ENCODE measurements at regions of chr1 and their contacts with region 1.

Region 1: DNA sequence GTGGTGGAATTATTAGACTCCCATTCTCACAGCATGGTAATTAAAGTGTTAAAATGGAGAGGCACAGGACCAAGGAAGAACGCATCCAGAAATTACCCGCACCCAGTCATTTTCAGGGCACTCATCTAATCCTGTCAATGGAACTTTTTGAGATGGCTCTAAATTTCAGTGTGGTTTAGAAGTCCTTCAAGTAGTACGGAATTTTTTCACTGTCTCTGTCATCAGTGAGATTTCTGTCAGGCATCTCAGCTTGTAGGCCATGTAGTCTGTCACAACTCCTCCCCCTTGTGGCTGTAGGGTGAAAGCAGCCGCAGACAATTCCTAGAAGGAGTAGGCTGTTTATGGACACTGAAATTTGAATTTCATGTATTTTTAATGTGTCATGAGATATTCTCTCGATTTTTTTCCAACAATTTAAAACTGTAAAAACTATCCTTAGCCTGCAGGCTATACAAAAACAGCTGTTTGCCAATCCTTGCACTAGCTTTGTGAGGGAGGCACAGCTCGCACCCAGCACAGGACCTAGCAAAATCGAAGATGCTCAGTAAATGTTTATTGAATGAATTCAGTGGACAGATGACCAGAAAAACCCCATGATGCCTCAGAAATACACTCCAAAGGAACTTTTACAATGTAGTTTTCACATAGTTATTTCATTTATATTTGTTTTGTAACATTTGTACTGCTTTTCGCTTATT is 6.6 kb upstream of the NUP133 start:
- DNase-seq: peak; percentile 47
- H3K4me3 ChIP-seq: no peak overlapping the region
- CTCF ChIP-seq: peak; percentile 83

Region 2: GRCh38 chr1:229529639-229530038 is 14.9 kb after region 1 on chr1:
- CTCF ChIA-PET with region 1: interaction called, 29 read pairs
- POLR2A ChIA-PET with region 1: no interaction called
- DNase-seq: no peak
- H3K4me3 ChIP-seq: no peak overlapping the region
- CTCF ChIP-seq: no peak

Region 3: DNA sequence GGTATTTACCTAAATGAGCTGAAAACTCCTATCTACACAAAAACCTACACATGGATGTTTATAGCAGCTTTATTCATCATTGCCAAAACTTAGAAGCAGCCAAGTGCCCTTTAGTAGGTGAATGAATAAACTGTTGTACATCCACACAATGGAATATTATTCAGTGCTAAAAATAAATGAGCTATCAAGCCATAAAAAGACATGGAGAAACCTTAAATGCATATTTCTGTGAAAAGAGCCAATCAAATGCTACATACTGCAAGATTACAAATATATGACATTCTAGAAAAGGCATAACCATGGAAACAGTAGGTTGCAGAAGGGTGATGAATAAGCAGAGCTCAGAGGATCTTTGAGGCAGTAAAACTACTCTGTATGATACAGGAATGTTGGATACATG is 20.5 kb after region 1 on chr1:
- CTCF ChIA-PET with region 1: interaction called, 15 read pairs
- POLR2A ChIA-PET with region 1: no interaction called
- DNase-seq: no peak
- H3K4me3 ChIP-seq: no peak overlapping the region
- CTCF ChIP-seq: no peak

Measured in AG04449 (cell line).